AG04449 (cell line): ENCODE measurements at regions of chr1 and their contacts with region 1.

Region 1: GRCh38 chr1:152047730-152048402 is 11.1 kb upstream of the S100A11 start:
- DNase-seq: peak; percentile 98
- H3K4me3 ChIP-seq: peak overlapping the region; percentile 47
- CTCF ChIP-seq: peak; percentile 90

Region 2: GRCh38 chr1:151909150-151910149 is 138.4 kb before region 1 on chr1 and contains the start of gene THEM4:
- CTCF ChIA-PET with region 1: no interaction called
- POLR2A ChIA-PET with region 1: no interaction called
- DNase-seq: peak; percentile 71
- H3K4me3 ChIP-seq: peak within 1 kb of the TSS; percentile 73
- CTCF ChIP-seq: peak; percentile 46

Region 3: DNA sequence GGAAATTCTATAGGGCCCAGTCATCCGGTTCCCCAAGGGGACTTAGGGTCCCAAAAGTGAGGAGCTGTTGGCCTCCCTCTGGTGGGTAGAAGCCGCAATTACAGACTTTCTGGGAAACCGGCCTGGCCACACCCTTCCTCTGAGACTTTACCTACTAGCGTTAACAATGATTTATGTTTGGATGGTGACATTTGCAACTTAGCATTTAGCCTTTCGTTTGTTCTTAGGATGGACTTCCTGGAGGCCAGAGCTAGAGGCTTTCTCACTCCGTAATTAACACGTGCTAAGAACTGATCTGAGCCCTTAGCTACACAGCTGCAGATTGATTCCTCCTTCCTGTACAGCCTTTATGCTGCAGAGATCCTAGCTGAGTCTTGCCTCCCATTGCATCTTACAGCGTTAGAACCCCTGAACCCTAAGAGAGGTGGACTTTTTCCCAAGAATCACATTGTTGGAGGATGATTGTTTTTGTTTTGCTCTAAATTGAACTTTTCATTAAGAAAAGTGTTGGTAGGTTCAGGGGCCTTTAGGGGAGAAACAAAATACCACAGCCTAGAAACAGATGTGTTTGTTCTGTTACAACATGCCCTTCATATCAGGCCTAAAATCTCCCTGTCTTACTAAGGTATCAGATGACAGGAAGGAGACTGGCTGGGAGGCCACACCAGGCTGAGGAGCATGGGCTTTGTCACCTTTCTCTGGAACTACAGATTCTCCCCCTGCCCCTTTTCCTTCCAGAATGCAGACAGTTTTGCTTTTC is 13.0 kb before region 1 on chr1:
- CTCF ChIA-PET with region 1: interaction called, 59 read pairs
- POLR2A ChIA-PET with region 1: interaction called, 37 read pairs
- DNase-seq: no peak
- H3K4me3 ChIP-seq: peak overlapping the region; percentile 82
- CTCF ChIP-seq: peak; percentile 58

Region 4: GRCh38 chr1:152061952-152062351 is 14.1 kb after region 1 on chr1:
- CTCF ChIA-PET with region 1: interaction called, 20 read pairs
- POLR2A ChIA-PET with region 1: no interaction called
- DNase-seq: no peak
- H3K4me3 ChIP-seq: no peak overlapping the region
- CTCF ChIP-seq: no peak

Region 5: GRCh38 chr1:152110860-152111514 is 63.1 kb after region 1 on chr1:
- CTCF ChIA-PET with region 1: interaction called, 18 read pairs
- POLR2A ChIA-PET with region 1: no interaction called
- DNase-seq: no peak
- H3K4me3 ChIP-seq: peak overlapping the region; percentile 52
- CTCF ChIP-seq: no peak

Region 6: DNA sequence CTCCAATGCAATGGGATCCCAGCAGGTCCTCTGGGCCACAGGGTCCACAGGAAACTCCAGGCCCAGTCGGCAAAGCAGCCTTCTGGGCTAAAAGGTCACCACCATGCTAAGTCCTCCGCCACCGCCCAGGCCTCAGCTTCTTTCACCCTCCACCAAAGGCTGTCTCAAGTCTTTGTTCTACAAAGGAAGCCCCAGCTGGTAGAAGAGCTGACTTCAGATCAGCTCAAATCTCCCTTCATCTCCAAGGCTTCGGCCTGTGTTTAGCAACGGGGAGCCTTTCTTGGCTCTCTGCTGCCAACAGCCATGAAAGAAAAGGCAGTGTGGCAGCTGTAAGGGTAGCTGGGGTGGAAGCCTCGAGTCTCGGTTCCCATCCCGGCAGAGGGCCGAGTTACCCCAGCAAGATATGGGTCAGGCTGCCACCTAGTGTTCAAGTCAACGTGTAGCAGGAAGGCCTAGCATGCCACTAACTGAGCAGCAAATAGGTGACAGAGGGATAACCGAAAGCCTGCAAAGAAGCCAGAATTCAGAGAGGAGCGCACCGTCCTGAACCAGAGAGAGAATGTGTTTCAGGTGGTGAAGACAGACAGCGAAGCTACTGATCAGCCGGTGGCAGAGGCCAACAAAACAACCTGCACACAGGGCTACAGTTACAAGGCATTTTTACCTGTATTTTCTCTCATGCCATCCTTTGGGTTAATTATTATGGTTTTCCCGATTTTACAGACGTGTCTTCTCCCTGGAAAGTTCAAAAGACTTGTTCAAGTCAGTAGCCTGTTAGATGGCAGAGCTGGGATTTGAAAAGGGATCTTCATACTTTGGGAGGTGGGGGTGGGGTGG is 393.0 kb after region 1 on chr1:
- CTCF ChIA-PET with region 1: interaction called, 18 read pairs
- POLR2A ChIA-PET with region 1: no interaction called
- DNase-seq: no peak
- H3K4me3 ChIP-seq: no peak overlapping the region
- CTCF ChIP-seq: peak; percentile 82